HEK293 (cell line): ENCODE measurements at regions of chr12 and their contacts with region 1.

Region 1: GRCh38 chr12:52278541-52279421 is 4.3 kb downstream of the KRT86 start:
- H3K4me3 ChIP-seq: no peak overlapping the region
- H3K27ac ChIP-seq: no peak overlapping the region
- H3K4me1 ChIP-seq: no peaks in the 10 kb centered on the region; the same call in 1 of the 2 replicates
- CTCF ChIP-seq: peak; percentile 81

Region 2: DNA sequence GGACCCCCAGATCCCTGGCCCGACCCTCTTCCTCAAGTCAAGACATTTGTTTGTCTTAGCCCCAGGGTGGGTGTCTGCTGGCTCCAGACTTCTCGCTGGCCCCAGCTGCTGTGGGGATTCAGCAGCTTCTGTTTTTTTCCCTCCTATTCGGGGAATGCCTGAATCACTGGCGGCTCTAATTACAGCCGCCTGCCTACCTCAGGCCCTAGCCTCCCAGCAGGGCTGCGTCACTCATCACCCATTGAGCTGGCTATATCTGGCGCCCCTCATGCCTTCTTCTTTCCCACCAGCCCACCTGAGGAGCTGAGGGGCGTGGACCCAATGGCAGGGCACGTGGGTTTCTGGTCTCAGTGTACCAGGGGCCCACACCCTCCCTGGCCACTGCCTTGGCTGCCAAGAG is 97.0 kb before region 1 on chr12:
- CTCF ChIA-PET with region 1: interaction called, 10 read pairs
- POLR2A ChIA-PET with region 1: no interaction called
- H3K4me3 ChIP-seq: no peak overlapping the region
- H3K27ac ChIP-seq: no peak overlapping the region
- H3K4me1 ChIP-seq: peaks cover 5% of the 10 kb centered on the region; the same call in 1 of the 2 replicates
- CTCF ChIP-seq: no peak

Region 3: GRCh38 chr12:52213512-52214420 is 65.0 kb before region 1 on chr12:
- CTCF ChIA-PET with region 1: interaction called, 56 read pairs
- POLR2A ChIA-PET with region 1: interaction called, 3 read pairs
- H3K4me3 ChIP-seq: no peak overlapping the region
- H3K27ac ChIP-seq: no peak overlapping the region
- H3K4me1 ChIP-seq: no peaks in the 10 kb centered on the region; the same call in 1 of the 2 replicates
- CTCF ChIP-seq: peak; percentile 98

Region 4: GRCh38 chr12:52243856-52244614 is 34.7 kb before region 1 on chr12:
- CTCF ChIA-PET with region 1: interaction called, 17 read pairs
- POLR2A ChIA-PET with region 1: interaction called, 3 read pairs
- H3K4me3 ChIP-seq: no peak overlapping the region
- H3K27ac ChIP-seq: peak overlapping the region; percentile 39; the same call in 1 of the 2 replicates
- H3K4me1 ChIP-seq: peaks cover 18% of the 10 kb centered on the region
- CTCF ChIP-seq: no peak

Region 5: GRCh38 chr12:52295663-52296062 is 16.9 kb after region 1 on chr12:
- CTCF ChIA-PET with region 1: interaction called, 19 read pairs
- POLR2A ChIA-PET with region 1: interaction called, 4 read pairs
- H3K4me3 ChIP-seq: no peak overlapping the region
- H3K27ac ChIP-seq: no peak overlapping the region
- H3K4me1 ChIP-seq: no peaks in the 10 kb centered on the region
- CTCF ChIP-seq: no peak

Region 6: DNA sequence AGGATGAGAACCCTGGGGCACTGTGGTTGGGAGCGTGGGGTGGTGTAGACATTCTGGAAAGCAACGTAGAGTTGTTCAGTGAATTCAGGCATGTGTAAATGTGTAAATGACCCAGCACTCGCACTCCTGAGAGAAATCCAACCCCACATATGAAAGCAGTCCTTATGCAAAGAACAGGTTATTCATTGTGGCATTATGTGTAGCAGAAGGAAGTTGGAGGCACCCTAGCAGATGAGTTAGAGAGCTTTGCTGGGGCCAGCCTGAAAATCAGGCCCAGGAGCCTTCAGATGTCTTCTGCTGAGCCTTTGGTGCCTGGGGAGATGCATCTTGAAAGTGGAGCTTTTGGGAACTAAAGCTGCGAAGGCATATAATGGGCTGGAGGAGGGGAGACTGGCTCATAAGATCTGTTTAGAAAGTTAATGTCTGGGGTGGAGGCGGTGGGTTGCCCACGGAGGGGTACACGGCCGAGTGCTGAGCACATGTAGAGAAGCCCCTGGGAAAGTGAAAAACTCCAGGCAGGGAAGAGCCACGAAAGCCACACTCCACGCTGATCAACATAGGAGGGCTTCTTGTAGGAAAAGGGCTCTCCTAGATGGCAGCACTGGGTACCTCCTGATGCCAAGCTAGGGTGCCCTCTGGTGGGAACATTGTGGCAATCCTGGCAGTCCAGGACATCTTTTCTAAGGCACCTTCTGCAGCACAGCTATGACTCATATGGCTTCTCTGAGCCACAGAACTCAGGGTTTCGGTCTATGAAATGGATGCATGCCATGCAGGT is 48.5 kb after region 1 on chr12:
- CTCF ChIA-PET with region 1: interaction called, 46 read pairs
- POLR2A ChIA-PET with region 1: interaction called, 6 read pairs
- H3K4me3 ChIP-seq: no peak overlapping the region
- H3K27ac ChIP-seq: no peak overlapping the region
- H3K4me1 ChIP-seq: no peaks in the 10 kb centered on the region
- CTCF ChIP-seq: peak; percentile 97